ENCODE measurements at regions of chr3 and their contacts with region 1.

Region 1: DNA sequence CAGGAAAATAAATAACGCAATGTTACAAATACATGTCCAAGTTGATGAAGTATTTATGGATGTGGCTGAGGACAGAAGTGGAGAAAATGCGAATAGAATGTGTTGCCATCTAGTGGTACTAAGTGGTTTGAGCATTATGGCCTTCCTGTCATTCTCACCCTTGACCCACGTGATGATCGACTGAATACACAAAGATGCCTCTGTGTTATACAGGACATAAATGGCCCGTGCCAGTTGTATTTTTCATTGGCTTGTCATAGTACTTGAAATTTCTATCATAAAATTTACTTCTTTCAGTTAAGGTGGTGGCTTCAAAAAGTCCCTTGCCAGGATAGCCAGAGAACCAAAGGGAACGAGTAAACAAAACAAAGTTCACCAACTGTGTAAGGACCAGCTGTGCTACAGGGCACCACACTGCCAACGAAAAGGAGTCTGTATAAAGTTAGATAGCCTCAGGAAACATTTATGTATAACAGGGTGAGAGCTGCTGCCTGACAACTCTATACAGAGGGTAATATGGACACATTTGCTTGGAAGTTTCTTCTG is 103.7 kb downstream of the MYH15 start:
- DNase-seq: peak; percentile 75
- ATAC-seq: peak; percentile 97
- H3K4me3 ChIP-seq: no peak overlapping the region
- H3K27ac ChIP-seq: peak overlapping the region; percentile 13; the same call in 1 of the 2 replicates
- H3K4me1 ChIP-seq: peaks cover 6% of the 10 kb centered on the region; the same call in 1 of the 2 replicates
- H3K27me3 ChIP-seq: no peaks in the 10 kb centered on the region
- CTCF ChIP-seq: peak; percentile 87

Region 2: DNA sequence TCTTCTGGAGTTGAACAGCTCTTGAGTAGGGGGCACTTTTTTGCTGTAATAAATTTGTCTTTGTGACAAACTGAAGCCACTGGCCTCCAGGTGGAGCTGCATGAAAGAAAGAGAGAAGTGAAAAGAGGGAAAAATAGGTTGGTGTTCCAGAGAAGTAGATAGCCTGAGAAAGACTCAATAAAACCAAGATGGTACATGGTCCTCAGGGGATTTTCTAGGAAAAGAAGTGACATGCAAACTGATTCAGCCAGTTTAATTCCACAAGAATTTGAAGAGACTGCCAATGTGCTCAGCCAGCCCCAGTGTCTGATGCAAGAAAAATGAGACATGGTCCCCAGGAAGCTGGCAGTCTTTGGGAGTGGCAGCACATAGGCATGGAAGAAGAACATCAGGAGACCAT is 468.6 kb before region 1 on chr3:
- CTCF ChIA-PET with region 1: no interaction called
- POLR2A ChIA-PET with region 1: no interaction called
- in situ Hi-C with region 1: no loop called
- intact Hi-C with region 1: loop called (anchors 2 kb)
- DNase-seq: no peak
- ATAC-seq: no peak
- H3K4me3 ChIP-seq: no peak overlapping the region
- H3K27ac ChIP-seq: no peak overlapping the region
- H3K4me1 ChIP-seq: no peaks in the 10 kb centered on the region
- H3K27me3 ChIP-seq: no peaks in the 10 kb centered on the region
- CTCF ChIP-seq: peak; percentile 48

Region 3: GRCh38 chr3:107953722-107954121 is 453.0 kb before region 1 on chr3:
- CTCF ChIA-PET with region 1: no interaction called
- POLR2A ChIA-PET with region 1: no interaction called
- in situ Hi-C with region 1: no loop called
- intact Hi-C with region 1: no loop called
- DNase-seq: no peak
- ATAC-seq: no peak
- H3K4me3 ChIP-seq: no peak overlapping the region
- H3K27ac ChIP-seq: no peak overlapping the region
- H3K4me1 ChIP-seq: no peaks in the 10 kb centered on the region
- H3K27me3 ChIP-seq: no peaks in the 10 kb centered on the region; the same call in 1 of the 2 replicates
- CTCF ChIP-seq: no peak

Region 4: DNA sequence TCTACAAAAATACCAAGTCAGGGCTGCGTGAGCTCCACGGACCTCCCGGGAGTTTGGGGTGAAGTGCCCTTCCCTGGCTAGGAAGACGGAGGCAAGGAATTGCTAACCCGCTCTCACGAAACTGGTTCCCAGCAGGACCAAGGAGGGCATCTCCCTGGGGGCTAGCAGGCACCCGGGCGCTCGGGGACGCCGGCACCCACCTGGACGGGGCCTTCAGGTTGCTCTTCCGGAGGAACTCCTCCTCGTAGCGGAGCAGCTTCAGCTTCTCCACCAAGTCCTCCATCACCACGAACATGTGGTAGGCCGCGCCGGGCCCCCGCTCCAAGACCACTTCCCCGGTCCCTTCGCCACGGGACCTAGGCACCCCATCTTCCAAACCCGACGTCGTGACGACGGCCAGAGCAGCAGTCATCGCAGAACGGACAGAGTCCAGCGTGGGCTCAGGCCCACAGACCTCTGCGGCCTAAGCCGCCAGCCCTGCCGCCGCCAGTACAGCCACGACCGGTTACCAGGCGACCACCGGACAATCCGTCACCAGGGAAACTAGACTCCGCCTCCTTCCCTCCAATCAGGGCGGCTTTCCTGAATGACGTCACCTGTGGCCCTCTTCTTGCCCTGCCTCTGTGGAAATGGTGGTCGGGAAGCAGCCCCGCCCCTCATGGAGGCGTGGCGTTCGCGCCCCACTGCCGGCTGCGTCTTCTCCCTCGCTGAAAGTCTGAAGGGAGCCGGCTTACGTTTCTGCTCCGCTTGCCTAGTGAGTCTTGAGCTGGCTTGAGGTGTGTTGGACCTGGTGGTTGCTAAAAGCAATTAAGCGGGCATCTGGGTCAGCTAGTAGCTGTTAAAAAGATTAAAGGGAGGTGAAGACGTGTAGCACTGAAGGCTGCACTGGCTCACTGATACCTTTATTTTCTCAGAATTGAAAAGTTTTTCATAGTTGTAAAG is 184.6 kb before region 1 on chr3 and contains the start of gene IFT57:
- CTCF ChIA-PET with region 1: no interaction called
- POLR2A ChIA-PET with region 1: no interaction called
- in situ Hi-C with region 1: no loop called
- intact Hi-C with region 1: loop called (anchors 5 kb)
- DNase-seq: peak; percentile 81
- ATAC-seq: peak; percentile 98
- H3K4me3 ChIP-seq: peak within 1 kb of the TSS; percentile 67 to 96
- H3K27ac ChIP-seq: peak within 1 kb of the TSS; percentile 88
- H3K4me1 ChIP-seq: peaks cover 30% of the 10 kb centered on the region
- H3K27me3 ChIP-seq: no peaks in the 10 kb centered on the region
- CTCF ChIP-seq: no peak
- total RNA-seq, gene IFT57: 45.7 TPM

Region 5: GRCh38 chr3:108338901-108339545 is 67.7 kb before region 1 on chr3:
- CTCF ChIA-PET with region 1: no interaction called
- POLR2A ChIA-PET with region 1: no interaction called
- in situ Hi-C with region 1: no loop called
- intact Hi-C with region 1: no loop called
- DNase-seq: no peak
- ATAC-seq: no peak
- H3K4me3 ChIP-seq: no peak overlapping the region
- H3K27ac ChIP-seq: no peak overlapping the region
- H3K4me1 ChIP-seq: no peaks in the 10 kb centered on the region
- H3K27me3 ChIP-seq: no peaks in the 10 kb centered on the region
- CTCF ChIP-seq: no peak

Measured in Panc1 (cell line).